H1 (cell line): ENCODE measurements at regions of chr1 and their contacts with region 1.

Region 1: DNA sequence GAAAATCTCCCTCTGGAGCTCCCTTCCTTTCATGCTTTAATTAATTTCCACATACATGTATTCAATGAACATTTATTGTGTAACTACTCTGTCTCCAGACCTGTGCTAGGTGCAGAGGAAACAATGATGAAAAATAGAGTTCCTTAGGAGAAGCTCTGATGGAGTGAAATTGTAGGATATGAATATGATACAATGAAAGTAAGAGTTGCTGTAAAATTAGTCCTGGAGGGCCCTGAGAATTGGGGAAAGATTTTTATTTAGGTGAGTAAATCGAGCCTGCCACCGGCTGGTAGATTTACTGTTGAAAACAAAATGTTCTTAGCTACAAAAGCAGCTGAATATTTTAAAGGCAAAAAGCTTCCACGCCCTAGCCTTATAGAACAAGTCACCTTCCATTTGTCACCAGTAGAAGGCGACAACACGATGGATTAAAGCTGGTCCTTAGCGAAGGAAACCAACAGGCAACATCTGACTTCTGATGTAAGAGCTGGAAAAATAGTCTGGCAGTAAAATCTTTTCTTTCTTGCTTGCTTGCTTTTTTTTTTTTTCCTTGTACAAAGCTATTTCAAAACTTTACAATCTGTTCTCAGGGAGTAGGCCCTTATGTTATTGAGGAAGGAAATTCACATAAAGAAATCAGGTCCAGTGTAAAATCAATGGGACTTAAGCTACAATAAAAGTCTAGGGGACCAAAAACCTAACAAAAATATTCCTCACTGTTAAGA is 82.0 kb upstream of the ROR1 start:
- DNase-seq: no peak
- H3K4me3 ChIP-seq: no peak overlapping the region
- H3K27ac ChIP-seq: no peak overlapping the region
- H3K4me1 ChIP-seq: no peaks in the 10 kb centered on the region
- H3K27me3 ChIP-seq: no peaks in the 10 kb centered on the region
- CTCF ChIP-seq: peak in 2 of 3 experiments; percentile 71 to 92; a peak in 3 of 4 replicates
- EP300 ChIP-seq: no peak
- POLR2A ChIP-seq: no peak
- RAD21 ChIP-seq: peak; percentile 90 to 92

Region 2: GRCh38 chr1:63307196-63307794 is 384.6 kb before region 1 on chr1:
- CTCF ChIA-PET with region 1: no interaction called
- POLR2A ChIA-PET with region 1: no interaction called
- DNase-seq: no peak
- H3K4me3 ChIP-seq: no peak overlapping the region
- H3K27ac ChIP-seq: no peak overlapping the region
- H3K4me1 ChIP-seq: peaks cover 0 to 12% (median 2%) of the 10 kb centered on the region in 4 experiments; a peak in 5 of 7 replicates
- H3K27me3 ChIP-seq: no peaks in the 10 kb centered on the region; a peak in 1 of 7 replicates
- CTCF ChIP-seq: no peak
- EP300 ChIP-seq: no peak
- POLR2A ChIP-seq: no peak
- RAD21 ChIP-seq: no peak

Region 3: GRCh38 chr1:63593303-63593885 is 98.5 kb before region 1 on chr1 and contains the start of gene PGM1:
- CTCF ChIA-PET with region 1: no interaction called
- POLR2A ChIA-PET with region 1: no interaction called
- DNase-seq: peak; percentile 50 to 84
- H3K4me3 ChIP-seq: peak within 1 kb of the TSS; percentile 81 to 89 (median 85)
- H3K27ac ChIP-seq: no peak within 1 kb of the TSS; the same call in 1 of the 2 replicates
- H3K4me1 ChIP-seq: peaks cover 0 to 3% (median under 1%) of the 10 kb centered on the region in 4 experiments; a peak in 2 of 7 replicates
- H3K27me3 ChIP-seq: no peaks in the 10 kb centered on the region
- CTCF ChIP-seq: no peak
- EP300 ChIP-seq: no peak
- POLR2A ChIP-seq: no peak; a peak in 2 of 3 replicates
- RAD21 ChIP-seq: no peak
- total RNA-seq, gene PGM1: 60.2 and 65.4 TPM in 2 replicates

Region 4: GRCh38 chr1:63705078-63705477 is 13.2 kb after region 1 on chr1:
- CTCF ChIA-PET with region 1: interaction called, 26 read pairs
- POLR2A ChIA-PET with region 1: no interaction called
- DNase-seq: no peak
- H3K4me3 ChIP-seq: no peak overlapping the region
- H3K27ac ChIP-seq: no peak overlapping the region
- H3K4me1 ChIP-seq: peaks cover 0 to 9% (median 3%) of the 10 kb centered on the region in 4 experiments; a peak in 4 of 7 replicates
- H3K27me3 ChIP-seq: no peaks in the 10 kb centered on the region
- CTCF ChIP-seq: no peak
- EP300 ChIP-seq: no peak
- POLR2A ChIP-seq: no peak
- RAD21 ChIP-seq: no peak

Region 5: GRCh38 chr1:63773815-63774616 is 82.2 kb after region 1 on chr1 and contains the start of gene ROR1:
- CTCF ChIA-PET with region 1: interaction called, 16 read pairs
- POLR2A ChIA-PET with region 1: interaction called, 3 read pairs
- DNase-seq: peak; percentile 60 to 91
- H3K4me3 ChIP-seq: peak within 1 kb of the TSS; percentile 79 to 89 (median 82)
- H3K27ac ChIP-seq: peak within 1 kb of the TSS; percentile 68; the same call in 1 of the 2 replicates
- H3K4me1 ChIP-seq: peaks cover 16 to 35% (median 21%) of the 10 kb centered on the region in 4 experiments; a peak in 6 of 7 replicates
- H3K27me3 ChIP-seq: no peaks in the 10 kb centered on the region
- CTCF ChIP-seq: peak; percentile 72 to 76 (median 72)
- EP300 ChIP-seq: peak in 1 of 2 experiments; percentile 20; a peak in 1 of 3 replicates
- POLR2A ChIP-seq: no peak; a peak in 1 of 3 replicates
- RAD21 ChIP-seq: peak; percentile 77 to 79
- total RNA-seq, gene ROR1: 70.3 and 73.6 TPM in 2 replicates

Region 6: GRCh38 chr1:63835075-63835633 is 143.3 kb after region 1 on chr1:
- CTCF ChIA-PET with region 1: interaction called, 11 read pairs
- POLR2A ChIA-PET with region 1: no interaction called
- DNase-seq: no peak
- H3K4me3 ChIP-seq: no peak overlapping the region
- H3K27ac ChIP-seq: no peak overlapping the region
- H3K4me1 ChIP-seq: peaks cover 6 to 32% (median 24%) of the 10 kb centered on the region in 4 experiments
- H3K27me3 ChIP-seq: no peaks in the 10 kb centered on the region
- CTCF ChIP-seq: no peak
- EP300 ChIP-seq: no peak
- POLR2A ChIP-seq: no peak
- RAD21 ChIP-seq: no peak

Region 7: GRCh38 chr1:63917571-63918417 is 225.9 kb after region 1 on chr1:
- CTCF ChIA-PET with region 1: interaction called, 20 read pairs
- POLR2A ChIA-PET with region 1: interaction called, 4 read pairs
- DNase-seq: peak; percentile 36 to 86
- H3K4me3 ChIP-seq: no peak overlapping the region
- H3K27ac ChIP-seq: no peak overlapping the region
- H3K4me1 ChIP-seq: peaks cover 11 to 42% (median 27%) of the 10 kb centered on the region in 4 experiments; a peak in 6 of 7 replicates
- H3K27me3 ChIP-seq: no peaks in the 10 kb centered on the region
- CTCF ChIP-seq: peak; percentile 62 to 86 (median 81)
- EP300 ChIP-seq: no peak
- POLR2A ChIP-seq: no peak
- RAD21 ChIP-seq: peak; percentile 52 to 66

Region 8: DNA sequence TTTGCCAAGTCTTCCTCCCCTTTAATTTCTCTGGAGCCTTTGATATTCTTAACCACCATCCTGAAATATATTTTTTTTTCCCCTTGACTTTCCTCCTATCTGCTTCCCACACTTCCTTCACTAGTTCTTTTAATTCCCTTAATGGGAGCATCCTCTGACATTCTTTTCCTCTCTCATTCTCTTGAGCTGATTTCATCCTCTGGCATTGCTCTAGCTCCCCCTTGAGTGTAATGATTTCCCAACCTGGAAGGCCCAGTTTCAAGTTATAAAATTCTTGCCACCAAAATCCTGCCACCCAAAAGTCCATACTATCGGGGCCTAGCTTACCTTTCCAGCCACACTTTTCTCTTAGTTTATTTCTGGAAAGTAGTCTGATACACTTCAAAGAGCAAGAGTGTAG is 472.1 kb after region 1 on chr1:
- CTCF ChIA-PET with region 1: interaction called, 17 read pairs
- POLR2A ChIA-PET with region 1: no interaction called
- DNase-seq: no peak
- H3K4me3 ChIP-seq: no peak overlapping the region
- H3K27ac ChIP-seq: no peak overlapping the region
- H3K4me1 ChIP-seq: no peaks in the 10 kb centered on the region
- H3K27me3 ChIP-seq: no peaks in the 10 kb centered on the region
- CTCF ChIP-seq: peak in 2 of 3 experiments; percentile 52 to 62; a peak in 3 of 4 replicates
- EP300 ChIP-seq: no peak
- POLR2A ChIP-seq: no peak
- RAD21 ChIP-seq: peak; percentile 69 to 72